Esophagus muscularis mucosa (tissue), 4 donors: ENCODE measurements at regions of chr10 and their contacts with region 1.

Region 1: DNA sequence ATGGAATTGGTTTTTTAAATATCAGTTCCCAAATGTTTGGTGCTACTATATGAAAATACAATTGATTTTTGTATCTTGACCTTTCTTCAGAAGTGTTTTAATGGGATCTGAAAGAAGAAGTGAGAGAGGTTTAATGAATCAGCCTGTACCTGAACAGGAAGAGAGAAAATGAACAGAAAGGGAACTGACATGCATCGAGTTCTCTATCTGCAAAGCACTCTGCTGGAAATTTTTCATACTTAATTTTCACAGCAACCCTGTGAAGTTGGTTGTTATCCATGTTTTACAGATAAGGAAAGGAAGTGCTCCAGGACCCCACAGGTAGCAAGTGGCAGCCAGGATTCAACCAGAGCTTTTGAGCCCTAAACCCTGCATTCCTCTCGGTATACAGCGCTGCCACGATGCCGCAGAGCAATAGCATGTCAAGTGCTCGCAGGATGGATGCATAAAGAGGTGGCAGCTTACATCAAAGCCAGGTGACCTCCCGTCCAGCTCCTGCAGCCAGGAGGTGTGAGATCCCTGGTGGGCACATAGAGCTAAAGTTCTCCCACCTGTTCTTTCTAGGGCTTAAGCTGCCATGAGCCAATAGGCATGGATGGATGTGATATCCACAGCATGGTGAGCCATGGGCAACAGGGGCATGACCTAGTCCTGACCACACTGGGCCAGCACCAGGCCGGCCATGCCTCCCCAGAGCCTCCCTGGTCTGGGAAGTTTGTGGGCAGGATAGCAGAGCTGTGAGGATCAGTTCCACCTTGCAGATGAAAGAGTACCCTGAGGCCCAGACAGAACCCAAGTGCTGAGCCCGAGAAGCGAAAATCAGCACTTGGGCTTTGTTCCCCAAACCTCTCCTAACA is 57.1 kb downstream of the CALML3 start:
- DNase-seq: no peak
- H3K4me3 ChIP-seq: no peak overlapping the region
- H3K27ac ChIP-seq: no peak overlapping the region
- H3K4me1 ChIP-seq: peaks cover 24 to 45% (median 34%) of the 10 kb centered on the region in 4 donors
- H3K27me3 ChIP-seq: no peaks in the 10 kb centered on the region
- CTCF ChIP-seq: no peak
- EP300 ChIP-seq: no peak
- POLR2A ChIP-seq: no peak

Region 2: DNA sequence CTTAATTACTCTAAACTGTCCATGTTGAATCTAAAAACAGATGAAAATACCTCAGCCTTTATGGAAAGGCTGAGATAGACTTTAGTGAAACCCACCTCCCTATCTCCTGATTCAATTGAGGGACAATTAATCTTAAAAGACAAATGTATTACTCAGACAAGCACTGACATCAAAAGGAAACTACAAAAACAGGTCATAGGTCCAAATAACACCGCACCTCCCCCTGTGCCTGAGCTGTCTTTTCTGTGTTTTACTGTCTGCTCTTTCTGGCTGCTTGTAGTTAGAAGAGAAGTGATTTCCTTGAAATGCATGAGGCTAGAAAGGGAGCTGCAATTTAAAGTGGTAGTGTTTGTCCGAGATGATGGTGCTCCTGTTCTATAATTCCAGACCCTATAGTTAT is 413.0 kb before region 1 on chr10:
- intact Hi-C with region 1: no loop called
- DNase-seq: no peak
- H3K4me3 ChIP-seq: no peak overlapping the region
- H3K27ac ChIP-seq: no peak overlapping the region
- H3K4me1 ChIP-seq: no peaks in the 10 kb centered on the region
- H3K27me3 ChIP-seq: no peaks in the 10 kb centered on the region
- CTCF ChIP-seq: no peak
- EP300 ChIP-seq: no peak
- POLR2A ChIP-seq: no peak

Region 3: DNA sequence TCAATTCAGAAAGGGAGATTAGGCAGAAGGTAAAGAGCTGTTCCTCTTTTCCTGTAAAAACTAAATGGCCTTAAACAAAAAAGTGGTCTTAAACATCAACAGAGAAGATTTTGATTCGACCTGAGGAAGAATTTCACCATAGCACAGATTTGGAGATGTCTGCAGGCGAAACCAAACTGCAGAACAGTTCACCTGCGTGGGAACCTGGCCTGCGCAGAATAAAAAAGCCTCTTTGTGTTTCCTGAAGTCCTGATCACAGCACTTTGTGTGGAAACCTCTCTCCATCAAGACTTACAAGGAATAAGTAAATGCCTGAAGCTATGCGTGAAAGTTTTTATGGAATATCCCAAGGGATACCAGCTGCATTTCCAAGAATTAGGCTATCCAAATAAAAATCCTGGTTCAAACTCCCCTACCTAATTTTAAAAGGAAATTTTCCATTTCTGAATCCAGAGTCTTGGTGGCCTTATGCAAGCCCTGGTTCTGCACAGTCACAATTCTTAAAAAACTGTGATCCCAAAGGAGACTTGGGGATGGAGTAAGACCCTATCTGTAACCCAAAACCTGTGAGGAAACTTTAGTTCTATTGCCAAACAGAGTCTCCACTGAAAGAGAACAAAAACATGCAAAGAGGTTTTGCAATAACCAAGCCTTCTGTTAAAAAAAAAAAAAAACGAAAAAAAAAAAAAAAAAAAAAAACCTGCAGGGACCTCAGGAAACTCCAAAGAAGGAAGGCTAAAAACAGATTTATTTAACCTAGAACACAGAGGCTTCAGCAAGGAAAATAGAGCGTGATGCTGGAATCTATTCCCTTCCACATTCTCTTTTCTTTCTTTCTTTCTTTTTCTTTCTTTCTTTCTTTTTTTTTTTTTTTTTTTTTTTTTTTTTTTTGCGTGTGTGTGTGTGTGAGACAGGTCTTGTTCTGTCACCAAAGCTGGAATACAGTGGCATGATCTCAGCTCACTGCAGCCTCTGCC is 46.7 kb before region 1 on chr10:
- intact Hi-C with region 1: no loop called
- DNase-seq: no peak
- H3K4me3 ChIP-seq: no peak overlapping the region
- H3K27ac ChIP-seq: peak overlapping the region; percentile 33 to 65 (median 62)
- H3K4me1 ChIP-seq: peaks cover 18 to 80% (median 70%) of the 10 kb centered on the region in 4 donors
- H3K27me3 ChIP-seq: no peaks in the 10 kb centered on the region
- CTCF ChIP-seq: no peak
- EP300 ChIP-seq: no peak
- POLR2A ChIP-seq: no peak

Region 4: DNA sequence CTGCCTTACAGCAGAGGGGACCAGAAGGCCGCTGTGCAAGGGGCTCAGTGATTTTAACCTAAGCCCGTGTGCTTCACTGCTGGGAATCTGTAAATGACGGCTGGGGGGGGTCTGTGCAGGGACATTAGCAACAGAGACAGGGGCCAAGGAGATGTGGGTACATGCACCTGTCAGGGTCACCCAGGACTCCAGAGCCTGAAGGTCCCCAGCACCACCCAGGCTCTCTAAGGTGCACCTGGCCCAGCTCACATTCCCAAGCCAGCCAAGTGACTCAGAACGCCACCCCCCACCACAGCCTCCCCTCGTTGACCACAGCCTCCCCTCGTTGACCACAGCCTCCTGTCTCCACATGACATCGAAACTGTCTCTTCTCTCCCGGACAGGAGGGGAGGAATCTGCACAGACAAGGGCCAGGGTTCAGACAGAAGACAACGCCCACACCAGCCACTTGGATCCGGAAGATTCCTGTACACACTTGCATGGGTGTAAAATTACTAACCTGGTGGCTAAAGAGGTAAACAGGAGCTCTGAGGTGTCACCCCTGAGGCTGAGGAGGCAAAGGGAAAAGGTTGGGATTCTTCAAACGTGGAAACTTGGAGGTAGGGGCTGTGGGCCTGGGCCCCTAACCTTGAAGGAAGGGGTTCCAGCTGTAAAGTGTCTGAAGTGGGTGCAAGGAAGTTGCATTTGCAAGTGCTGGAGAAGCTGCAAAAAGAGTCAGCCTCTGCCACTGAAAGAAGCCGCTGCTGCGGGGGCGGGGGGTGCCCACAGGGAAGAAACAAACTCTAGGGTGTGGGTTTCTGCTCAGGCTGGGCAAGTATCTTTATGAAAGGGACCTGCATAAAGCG is 30.1 kb before region 1 on chr10:
- intact Hi-C with region 1: no loop called
- DNase-seq: no peak
- H3K4me3 ChIP-seq: no peak overlapping the region
- H3K27ac ChIP-seq: peak overlapping the region in 3 of 4 donors; percentile 78 to 84 (median 79)
- H3K4me1 ChIP-seq: peaks cover 19 to 88% (median 71%) of the 10 kb centered on the region in 4 donors
- H3K27me3 ChIP-seq: no peaks in the 10 kb centered on the region
- CTCF ChIP-seq: no peak
- EP300 ChIP-seq: no peak
- POLR2A ChIP-seq: no peak

Region 5: GRCh38 chr10:5623081-5623748 is 41.3 kb after region 1 on chr10:
- intact Hi-C with region 1: loop called (anchors 2 kb)
- DNase-seq: peak; percentile 93
- H3K4me3 ChIP-seq: peak overlapping the region in 1 of 4 donors; percentile 13
- H3K27ac ChIP-seq: peak overlapping the region in 2 of 4 donors; percentile 14 to 62
- H3K4me1 ChIP-seq: peaks cover 3 to 45% (median 32%) of the 10 kb centered on the region in 4 donors
- H3K27me3 ChIP-seq: no peaks in the 10 kb centered on the region
- CTCF ChIP-seq: peak; percentile 91 to 97 (median 92)
- EP300 ChIP-seq: no peak
- POLR2A ChIP-seq: no peak

Region 6: DNA sequence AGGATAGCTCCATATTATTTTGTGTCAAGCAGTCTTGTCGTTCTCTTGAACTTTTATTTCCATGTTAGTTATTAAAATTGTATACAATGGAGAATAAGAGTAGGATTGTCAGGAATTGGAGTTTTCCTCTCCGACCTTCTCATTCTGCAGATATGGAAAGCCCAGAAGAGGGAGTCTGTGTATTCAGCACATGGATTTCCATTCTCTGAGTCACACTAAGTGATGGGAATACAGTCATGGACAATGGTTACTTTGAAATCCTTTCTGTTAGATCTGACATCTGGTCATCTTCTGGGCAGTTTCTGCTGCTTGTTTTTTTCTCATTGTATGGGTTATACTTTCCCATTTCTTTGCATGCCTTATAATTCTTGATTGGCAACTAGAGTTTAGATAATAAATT is 97.7 kb after region 1 on chr10:
- intact Hi-C with region 1: no loop called
- DNase-seq: no peak
- H3K4me3 ChIP-seq: no peak overlapping the region
- H3K27ac ChIP-seq: no peak overlapping the region
- H3K4me1 ChIP-seq: peaks cover 0 to 7% (median 6%) of the 10 kb centered on the region in 4 donors
- H3K27me3 ChIP-seq: peaks cover 0 to 4% (median 0%) of the 10 kb centered on the region in 4 donors
- CTCF ChIP-seq: no peak
- EP300 ChIP-seq: no peak
- POLR2A ChIP-seq: no peak